Common myeloid progenitor, CD34-positive (primary cell): ENCODE measurements at regions of chr14 and their contacts with region 1.

Region 1: GRCh38 chr14:23057757-23058653 is 685 bp upstream of the CDH24 start:
- DNase-seq: peak; percentile 80 to 90 (median 86)
- H3K4me3 ChIP-seq: peak overlapping the region; percentile 37 to 82 (median 79)
- H3K27ac ChIP-seq: no peak overlapping the region
- H3K4me1 ChIP-seq: peaks cover 0 to 21% (median 19%) of the 10 kb centered on the region in 4 experiments
- H3K27me3 ChIP-seq: peaks cover 0 to 7% (median 5%) of the 10 kb centered on the region in 5 experiments

Region 2: GRCh38 chr14:23006544-23007419 is 51.2 kb before region 1 on chr14:
- CTCF ChIA-PET with region 1: interaction called, 933 read pairs
- POLR2A ChIA-PET with region 1: interaction called, 3 read pairs
- DNase-seq: peak; percentile 98 to 99 (median 99)
- H3K4me3 ChIP-seq: peak overlapping the region; percentile 47 to 92 (median 86)
- H3K27ac ChIP-seq: peak overlapping the region; percentile 89 to 95
- H3K4me1 ChIP-seq: peaks cover 8 to 34% (median 28%) of the 10 kb centered on the region in 4 experiments
- H3K27me3 ChIP-seq: no peaks in the 10 kb centered on the region

Region 3: GRCh38 chr14:23034483-23035302 is 23.3 kb before region 1 on chr14 and contains the start of gene PSMB5:
- CTCF ChIA-PET with region 1: interaction called, 44 read pairs
- POLR2A ChIA-PET with region 1: no interaction called
- DNase-seq: peak; percentile 97 to 99 (median 98)
- H3K4me3 ChIP-seq: peak within 1 kb of the TSS; percentile 76 to 97 (median 89)
- H3K27ac ChIP-seq: peak within 1 kb of the TSS; percentile 88 to 95
- H3K4me1 ChIP-seq: peaks cover 6 to 12% (median 11%) of the 10 kb centered on the region in 4 experiments
- H3K27me3 ChIP-seq: no peaks in the 10 kb centered on the region

Region 4: DNA sequence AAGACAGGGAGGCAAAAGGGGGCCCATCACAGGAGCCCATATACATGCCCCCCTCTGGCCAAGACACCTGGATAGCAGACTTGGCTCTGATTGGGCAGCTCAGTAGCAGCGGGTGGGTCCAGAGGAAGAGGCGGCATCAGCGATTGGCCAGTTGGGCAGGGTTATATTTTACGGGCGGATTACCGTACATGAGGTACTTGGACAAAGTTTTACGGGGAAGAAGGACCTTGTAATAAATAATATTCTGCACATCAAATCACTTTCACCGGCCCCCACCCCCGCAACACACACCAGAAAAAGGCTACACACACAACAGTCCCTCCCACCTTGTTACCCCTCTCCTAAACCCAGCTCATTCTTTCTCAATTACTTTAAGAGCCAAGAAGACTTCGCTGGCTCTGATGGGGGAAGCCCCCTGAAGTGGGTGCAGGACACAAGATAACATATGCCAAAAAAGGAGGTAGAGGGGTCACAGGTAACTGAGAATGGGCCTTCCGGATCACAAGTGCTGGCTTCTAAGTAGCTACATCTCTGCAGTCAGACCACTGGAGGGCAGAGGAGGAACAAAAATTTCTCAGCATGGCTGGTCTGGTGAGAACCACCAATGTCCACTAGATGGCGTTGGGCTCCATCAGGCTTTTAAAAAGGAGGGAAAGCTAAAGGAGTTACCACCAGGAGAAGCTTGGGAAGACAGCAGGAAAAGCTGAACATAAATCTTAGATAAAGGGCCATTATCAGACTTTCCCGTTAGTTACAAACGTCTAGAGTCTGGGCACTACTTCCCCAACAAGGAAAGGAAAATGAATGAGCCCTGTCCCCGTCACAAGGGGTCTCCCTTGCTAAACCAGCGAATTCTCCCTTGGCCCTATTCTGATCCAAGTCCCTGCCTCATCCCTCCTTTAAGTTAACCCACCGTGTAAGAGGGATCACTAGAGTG is 10.7 kb after region 1 on chr14:
- CTCF ChIA-PET with region 1: interaction called, 41 read pairs
- POLR2A ChIA-PET with region 1: no interaction called
- DNase-seq: peak; percentile 84 to 91 (median 89)
- H3K4me3 ChIP-seq: no peak overlapping the region
- H3K27ac ChIP-seq: no peak overlapping the region
- H3K4me1 ChIP-seq: peaks cover 0 to 33% (median 28%) of the 10 kb centered on the region in 4 experiments
- H3K27me3 ChIP-seq: no peaks in the 10 kb centered on the region

Region 5: DNA sequence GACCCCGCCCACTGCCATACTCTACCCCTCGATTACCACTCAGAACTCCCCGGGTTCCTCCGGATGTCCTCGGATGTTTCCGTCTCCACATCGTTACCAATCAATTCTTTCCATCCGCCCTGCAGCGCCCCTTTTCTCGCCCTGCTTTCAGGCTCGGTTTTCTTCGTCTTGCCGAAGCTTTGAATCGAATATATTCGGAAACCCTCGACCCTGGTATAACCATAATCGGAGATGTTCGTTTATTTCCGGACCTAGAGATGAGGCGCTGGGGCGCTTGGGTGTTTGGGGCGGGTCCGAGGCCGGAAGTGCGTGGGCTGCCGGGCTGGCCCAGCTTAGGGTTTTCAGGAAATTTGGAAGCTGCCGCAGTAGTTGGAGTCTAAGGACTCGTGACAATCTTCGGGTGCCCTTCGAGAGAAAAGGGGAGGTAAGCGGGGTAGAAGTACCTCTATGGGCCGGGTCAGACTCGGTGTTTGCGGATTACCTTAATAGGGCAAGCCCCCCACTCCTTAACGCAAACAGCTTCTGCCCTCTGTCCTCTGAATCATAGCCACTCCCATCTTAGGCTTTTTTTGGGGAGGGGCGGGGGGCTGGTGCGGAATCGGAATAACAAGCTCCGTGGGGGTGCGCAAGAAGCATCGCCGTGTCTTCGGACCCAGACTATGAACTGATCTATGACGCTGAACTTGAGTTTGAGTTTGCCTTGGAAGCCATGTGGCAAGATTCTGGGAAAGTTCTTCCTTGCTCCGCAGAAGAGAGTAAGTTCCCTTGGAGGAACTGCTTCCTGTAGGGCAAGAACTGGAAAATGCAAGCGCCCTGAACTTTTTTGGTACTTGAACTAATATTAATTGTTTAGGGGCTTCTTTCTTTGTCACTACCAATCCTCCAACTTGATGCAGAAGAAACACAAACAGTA is 37.4 kb after region 1 on chr14 and contains the start of gene C14orf119:
- CTCF ChIA-PET with region 1: interaction called, 11 read pairs
- POLR2A ChIA-PET with region 1: no interaction called
- DNase-seq: peak; percentile 100
- H3K4me3 ChIP-seq: peak within 1 kb of the TSS; percentile 85 to 100 (median 96)
- H3K27ac ChIP-seq: peak within 1 kb of the TSS; percentile 98 to 99
- H3K4me1 ChIP-seq: peaks cover 15 to 33% (median 20%) of the 10 kb centered on the region in 4 experiments
- H3K27me3 ChIP-seq: no peaks in the 10 kb centered on the region

Region 6: GRCh38 chr14:23141671-23142451 is 83.9 kb after region 1 on chr14:
- CTCF ChIA-PET with region 1: no interaction called
- POLR2A ChIA-PET with region 1: no interaction called
- DNase-seq: no peak
- H3K4me3 ChIP-seq: no peak overlapping the region
- H3K27ac ChIP-seq: no peak overlapping the region
- H3K4me1 ChIP-seq: no peaks in the 10 kb centered on the region
- H3K27me3 ChIP-seq: no peaks in the 10 kb centered on the region